Activated CD4-positive, alpha-beta T cell treated with anti-CD3 and anti-CD28 coated beads, Interleukin-2, amount 10 ng/mL, durations not matched to agents 7 days and 5 days (primary cell): ENCODE measurements at regions of chr5 and their contacts with region 1.

Region 1: GRCh38 chr5:172179361-172179989 is 8.5 kb downstream of the STK10 start:
- DNase-seq: peak; percentile 58
- H3K4me3 Mint-ChIP-seq: peak overlapping the region; percentile 86
- H3K27ac Mint-ChIP-seq: peak overlapping the region; percentile 95
- H3K4me1 Mint-ChIP-seq: peaks cover 84% of the 10 kb centered on the region
- H3K27me3 Mint-ChIP-seq: no peaks in the 10 kb centered on the region

Region 2: DNA sequence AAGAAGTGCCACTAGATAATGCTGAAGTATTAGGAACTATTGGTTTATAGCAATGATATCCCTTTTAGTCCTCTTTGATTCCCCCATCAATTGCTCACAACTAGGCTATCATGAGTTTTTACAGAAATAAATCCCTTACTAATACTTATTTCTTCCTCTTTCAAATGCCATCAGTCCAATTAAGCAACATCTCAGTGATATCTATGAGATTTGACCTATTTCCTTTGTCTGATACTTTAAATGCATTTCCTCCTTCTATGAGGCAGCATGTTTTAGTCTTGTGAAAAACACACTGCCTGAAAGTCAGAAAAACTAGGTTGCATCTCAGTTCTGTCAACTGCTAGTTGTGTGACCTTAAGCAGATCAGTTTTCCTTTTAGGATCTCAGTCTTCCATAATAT is 274.6 kb before region 1 on chr5:
- CTCF ChIA-PET with region 1: no interaction called
- POLR2A ChIA-PET with region 1: no interaction called
- DNase-seq: no peak
- H3K4me3 Mint-ChIP-seq: no peak overlapping the region
- H3K27ac Mint-ChIP-seq: no peak overlapping the region
- H3K4me1 Mint-ChIP-seq: peaks cover 21% of the 10 kb centered on the region
- H3K27me3 Mint-ChIP-seq: no peaks in the 10 kb centered on the region

Region 3: GRCh38 chr5:171978519-171978918 is 201.0 kb before region 1 on chr5:
- CTCF ChIA-PET with region 1: no interaction called
- POLR2A ChIA-PET with region 1: no interaction called
- DNase-seq: no peak
- H3K4me3 Mint-ChIP-seq: no peak overlapping the region
- H3K27ac Mint-ChIP-seq: no peak overlapping the region
- H3K4me1 Mint-ChIP-seq: peaks cover 13% of the 10 kb centered on the region
- H3K27me3 Mint-ChIP-seq: no peaks in the 10 kb centered on the region

Region 4: DNA sequence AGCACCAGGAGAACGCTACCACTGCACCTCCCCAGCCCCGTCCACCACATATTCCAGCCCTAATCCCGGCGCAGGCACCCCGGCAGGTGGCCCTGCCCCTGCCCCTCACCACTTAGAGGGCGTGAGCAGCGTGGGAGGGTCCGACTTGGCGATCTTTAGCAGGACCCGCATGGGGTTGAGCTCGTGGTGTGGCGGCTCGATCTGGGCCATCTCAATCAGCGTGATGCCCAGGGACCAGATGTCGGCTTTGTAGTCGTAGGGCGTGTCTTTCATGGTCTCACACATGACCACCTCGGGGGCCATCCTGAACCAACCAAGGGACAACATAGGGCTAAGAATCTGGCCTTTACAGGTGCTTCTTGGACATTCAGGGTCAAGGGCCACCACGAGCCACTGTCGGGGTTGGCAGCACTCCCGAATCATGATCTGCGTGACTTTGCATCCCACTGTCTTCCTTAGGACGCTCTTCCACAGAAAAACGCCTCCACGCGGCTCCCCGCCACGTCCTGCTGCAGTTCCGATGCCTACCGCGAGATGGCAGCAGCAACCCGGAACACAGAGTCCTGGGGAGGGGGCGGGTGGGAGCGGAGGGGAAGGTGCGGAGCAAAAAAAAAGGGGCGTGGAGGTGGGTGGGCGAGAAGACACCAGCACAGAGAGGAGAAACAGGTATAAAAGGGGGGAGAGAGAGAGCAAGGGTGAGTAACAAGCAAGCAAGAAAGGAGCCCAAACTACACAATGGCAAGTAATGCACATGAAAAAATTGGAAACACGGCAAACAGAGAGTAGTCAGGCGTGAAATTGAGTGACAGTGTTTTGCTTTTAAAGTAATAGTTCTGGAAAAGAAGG is 72.7 kb before region 1 on chr5:
- CTCF ChIA-PET with region 1: interaction called, 5 read pairs
- POLR2A ChIA-PET with region 1: interaction called, 12 read pairs
- DNase-seq: peak; percentile 67
- H3K4me3 Mint-ChIP-seq: no peak overlapping the region
- H3K27ac Mint-ChIP-seq: peak overlapping the region; percentile 57
- H3K4me1 Mint-ChIP-seq: peaks cover 65% of the 10 kb centered on the region
- H3K27me3 Mint-ChIP-seq: no peaks in the 10 kb centered on the region

Region 5: DNA sequence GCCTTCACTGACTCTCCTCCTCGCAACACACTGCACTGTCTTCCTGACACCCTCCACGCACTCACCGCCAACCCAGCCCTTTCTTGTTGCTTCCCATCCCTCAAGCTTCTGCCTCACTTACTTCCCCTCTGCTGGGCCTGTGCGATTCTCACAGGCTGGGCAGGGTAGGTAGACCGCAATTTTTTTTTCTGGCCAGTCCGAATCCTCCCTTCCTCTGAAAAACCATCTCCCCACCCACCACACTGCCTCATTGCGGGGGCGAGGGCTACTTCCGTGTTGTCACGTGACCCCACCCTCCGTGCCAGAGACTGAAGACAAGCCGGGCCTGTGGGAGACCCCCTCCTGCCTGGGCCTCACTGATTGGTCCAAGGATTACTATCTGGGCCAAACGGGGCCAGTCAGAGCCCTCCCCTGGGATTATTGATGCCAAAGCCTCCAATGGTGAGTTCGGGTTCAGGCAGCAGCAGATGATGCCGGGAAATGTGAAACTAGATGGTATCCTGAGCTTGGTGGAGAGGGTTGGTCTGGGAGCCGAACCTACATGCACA is 64.5 kb before region 1 on chr5:
- CTCF ChIA-PET with region 1: interaction called, 20 read pairs
- POLR2A ChIA-PET with region 1: interaction called, 12 read pairs
- DNase-seq: peak; percentile 78
- H3K4me3 Mint-ChIP-seq: peak overlapping the region; percentile 68
- H3K27ac Mint-ChIP-seq: peak overlapping the region; percentile 98
- H3K4me1 Mint-ChIP-seq: peaks cover 80% of the 10 kb centered on the region
- H3K27me3 Mint-ChIP-seq: no peaks in the 10 kb centered on the region

Region 6: GRCh38 chr5:172207511-172207910 is 28.0 kb after region 1 on chr5:
- CTCF ChIA-PET with region 1: no interaction called
- POLR2A ChIA-PET with region 1: no interaction called
- DNase-seq: no peak
- H3K4me3 Mint-ChIP-seq: no peak overlapping the region
- H3K27ac Mint-ChIP-seq: no peak overlapping the region
- H3K4me1 Mint-ChIP-seq: no peaks in the 10 kb centered on the region
- H3K27me3 Mint-ChIP-seq: no peaks in the 10 kb centered on the region